Body of pancreas (tissue), 4 donors: ENCODE measurements at regions of chr19 and their contacts with region 1.

Region 1: DNA sequence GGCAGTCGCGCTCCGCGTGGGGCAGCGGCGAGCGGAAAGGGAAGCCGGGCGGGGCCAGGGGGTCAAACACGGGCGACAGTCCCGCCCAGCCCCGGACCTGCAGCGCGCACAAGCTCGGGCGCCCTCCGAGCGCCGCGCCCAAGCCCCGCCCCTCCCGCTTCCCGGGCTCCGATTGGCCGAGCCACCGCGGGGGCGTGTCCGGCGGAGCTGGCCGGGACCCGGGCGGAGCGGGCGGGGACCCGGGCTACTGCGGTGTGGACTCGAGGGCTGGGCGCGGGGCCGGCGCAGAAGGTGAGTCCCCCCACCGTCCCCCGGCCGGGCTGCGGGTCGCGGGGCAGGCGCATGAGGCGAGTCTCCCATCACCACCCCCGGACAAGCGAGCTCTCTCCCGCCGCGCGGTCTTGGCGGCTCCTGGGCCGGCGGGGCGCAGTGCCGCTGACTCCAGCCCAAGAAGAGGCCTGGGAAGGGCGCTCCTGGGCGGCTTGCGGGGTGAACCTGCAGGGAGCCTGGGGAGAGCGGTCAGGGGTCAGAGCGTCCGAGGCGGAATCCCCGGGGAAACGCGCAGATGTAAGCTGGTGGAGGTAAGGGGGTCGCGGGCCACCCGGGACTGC is at the start of gene PLEKHF1:
- DNase-seq: peak; percentile 88 to 94 (median 89)
- ATAC-seq: peak; percentile 91
- H3K4me3 ChIP-seq: peak within 1 kb of the TSS; percentile 65 to 84
- H3K27ac ChIP-seq: peak within 1 kb of the TSS; percentile 59 to 87 (median 74)
- H3K4me1 ChIP-seq: peaks cover 73% of the 10 kb centered on the region
- H3K27me3 ChIP-seq: no peaks in the 10 kb centered on the region
- CTCF ChIP-seq: no peak
- POLR2A ChIP-seq: peak; percentile 20 to 44 (median 23)
- total RNA-seq, gene PLEKHF1: 13.5 to 16.5 TPM

Region 2: GRCh38 chr19:29212648-29213573 is 452.4 kb before region 1 on chr19 and contains the start of gene UQCRFS1:
- intact Hi-C with region 1: loop called (anchors 10 kb)
- DNase-seq: peak; percentile 95 to 96 (median 96)
- ATAC-seq: peak; percentile 98
- H3K4me3 ChIP-seq: peak within 1 kb of the TSS; percentile 43 to 44
- H3K27ac ChIP-seq: peak within 1 kb of the TSS; percentile 68 to 93 (median 88)
- H3K4me1 ChIP-seq: peaks cover 28% of the 10 kb centered on the region
- H3K27me3 ChIP-seq: no peaks in the 10 kb centered on the region
- CTCF ChIP-seq: peak in 1 of 7 experiments; percentile 6
- POLR2A ChIP-seq: peak; percentile 85 to 88 (median 86)
- total RNA-seq, gene UQCRFS1: 12.5 to 15.3 TPM

Region 3: DNA sequence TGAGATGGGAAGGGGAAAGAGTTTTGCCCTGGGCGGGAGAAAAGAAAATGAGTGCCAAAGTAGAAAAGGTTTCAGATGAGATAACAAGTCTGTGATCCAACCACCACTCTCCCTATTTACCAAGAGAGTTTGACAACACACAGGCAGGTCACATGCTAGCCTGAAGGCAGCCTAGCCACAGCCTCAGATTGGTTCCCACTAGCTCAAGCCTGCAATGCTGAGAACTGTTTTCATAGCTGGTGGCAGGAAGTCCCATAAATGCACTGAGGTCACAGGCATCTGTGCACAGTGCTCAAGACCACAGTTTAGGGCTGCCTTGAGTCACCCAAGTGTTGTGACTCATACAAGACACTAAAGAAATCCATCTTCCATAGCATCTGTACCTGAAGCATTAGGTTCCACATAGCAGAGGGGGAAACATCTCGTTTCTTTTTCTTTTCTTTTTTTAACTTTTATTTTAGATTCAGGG is 77.8 kb before region 1 on chr19:
- intact Hi-C with region 1: no loop called
- DNase-seq: no peak
- ATAC-seq: no peak
- H3K4me3 ChIP-seq: no peak overlapping the region
- H3K27ac ChIP-seq: no peak overlapping the region
- H3K4me1 ChIP-seq: no peaks in the 10 kb centered on the region
- H3K27me3 ChIP-seq: no peaks in the 10 kb centered on the region
- CTCF ChIP-seq: no peak
- POLR2A ChIP-seq: no peak

Region 4: DNA sequence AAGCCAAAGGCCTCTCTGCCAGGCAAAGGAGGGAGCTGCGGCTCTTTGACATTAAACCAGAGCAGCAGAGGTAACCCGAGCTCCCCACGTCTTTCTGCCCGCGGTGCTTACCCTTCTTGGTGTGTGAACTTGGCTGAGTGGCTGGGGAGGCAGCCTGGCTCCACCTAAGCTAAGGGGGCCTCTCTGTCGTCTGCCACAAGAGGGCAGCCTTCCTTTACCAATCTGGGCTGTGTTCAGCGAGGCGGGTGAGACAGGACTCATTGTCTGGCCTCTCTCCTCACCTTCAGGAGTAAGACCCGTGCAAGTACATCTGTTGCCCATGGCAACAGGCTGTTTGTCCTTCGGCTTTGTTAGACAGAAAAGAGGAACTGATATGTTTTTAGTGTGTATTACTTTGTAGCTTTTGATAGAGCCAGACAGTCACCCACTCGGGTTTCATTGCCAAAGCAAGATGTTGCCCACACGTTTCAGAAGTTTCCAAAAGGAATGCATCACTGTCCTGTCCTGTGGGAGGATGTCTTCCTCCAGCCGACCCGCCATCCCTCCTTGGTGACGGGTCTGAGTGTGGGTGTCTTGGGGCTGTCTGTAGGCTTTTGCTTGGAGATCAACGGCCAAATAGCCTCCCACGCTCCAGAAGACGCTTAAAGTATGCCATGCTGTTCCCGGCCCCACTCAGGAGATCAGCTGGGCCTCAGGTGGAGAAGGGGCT is 54.6 kb before region 1 on chr19:
- intact Hi-C with region 1: loop called (anchors 10 kb)
- DNase-seq: peak; percentile 80 to 87 (median 82)
- ATAC-seq: peak; percentile 71
- H3K4me3 ChIP-seq: no peak overlapping the region
- H3K27ac ChIP-seq: no peak overlapping the region
- H3K4me1 ChIP-seq: peaks cover 8% of the 10 kb centered on the region
- H3K27me3 ChIP-seq: no peaks in the 10 kb centered on the region
- CTCF ChIP-seq: peak; percentile 76 to 88 (median 80)
- POLR2A ChIP-seq: no peak

Region 5: GRCh38 chr19:29704562-29705558 is 39.5 kb after region 1 on chr19:
- intact Hi-C with region 1: no loop called
- DNase-seq: no peak
- ATAC-seq: no peak
- H3K4me3 ChIP-seq: no peak overlapping the region
- H3K27ac ChIP-seq: no peak overlapping the region
- H3K4me1 ChIP-seq: no peaks in the 10 kb centered on the region
- H3K27me3 ChIP-seq: no peaks in the 10 kb centered on the region
- CTCF ChIP-seq: no peak
- POLR2A ChIP-seq: no peak